AG04449 (cell line): ENCODE measurements at regions of chr2 and their contacts with region 1.

Region 1: GRCh38 chr2:46847235-46848068 is 68.2 kb downstream of the MCFD2 start:
- DNase-seq: peak; percentile 72
- H3K4me3 ChIP-seq: no peak overlapping the region
- CTCF ChIP-seq: no peak

Region 2: DNA sequence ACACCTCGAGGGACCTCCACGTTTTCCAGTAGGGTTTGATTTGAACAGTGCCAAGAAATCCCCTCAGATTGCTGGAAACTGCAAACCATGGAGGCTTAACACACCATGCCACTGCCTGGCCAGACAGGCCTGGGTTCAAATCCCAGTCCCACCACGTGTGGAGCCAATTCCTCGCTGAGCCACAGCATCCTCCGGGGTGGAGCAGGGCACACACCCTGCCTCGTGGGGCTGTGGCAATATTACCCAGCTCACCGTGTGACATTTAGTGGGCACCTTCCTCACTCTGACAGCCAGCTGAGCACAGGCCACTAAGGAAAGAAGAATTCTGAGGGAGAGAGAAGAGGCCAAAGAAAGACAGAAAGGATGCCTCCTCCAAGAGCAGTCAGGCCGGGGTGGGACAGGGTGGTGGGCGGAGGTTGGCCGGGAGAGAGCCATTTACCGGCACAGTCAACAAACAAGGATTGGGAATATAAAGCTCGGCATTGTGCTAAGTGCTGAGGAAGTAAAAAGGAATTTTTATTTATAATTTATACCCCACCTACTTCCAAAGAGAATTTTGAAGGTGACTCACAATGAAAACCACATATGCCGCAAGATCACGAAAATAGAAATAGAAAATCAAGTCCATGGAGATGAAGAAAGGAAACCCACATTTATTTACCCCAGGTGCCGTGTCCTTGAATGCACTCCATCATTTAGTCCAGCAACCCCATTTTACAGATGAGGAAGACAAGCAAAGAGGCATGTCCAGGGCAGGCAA is 43.4 kb before region 1 on chr2:
- CTCF ChIA-PET with region 1: interaction called, 4 read pairs
- POLR2A ChIA-PET with region 1: interaction called, 13 read pairs
- DNase-seq: peak; percentile 81
- H3K4me3 ChIP-seq: no peak overlapping the region
- CTCF ChIP-seq: no peak

Region 3: DNA sequence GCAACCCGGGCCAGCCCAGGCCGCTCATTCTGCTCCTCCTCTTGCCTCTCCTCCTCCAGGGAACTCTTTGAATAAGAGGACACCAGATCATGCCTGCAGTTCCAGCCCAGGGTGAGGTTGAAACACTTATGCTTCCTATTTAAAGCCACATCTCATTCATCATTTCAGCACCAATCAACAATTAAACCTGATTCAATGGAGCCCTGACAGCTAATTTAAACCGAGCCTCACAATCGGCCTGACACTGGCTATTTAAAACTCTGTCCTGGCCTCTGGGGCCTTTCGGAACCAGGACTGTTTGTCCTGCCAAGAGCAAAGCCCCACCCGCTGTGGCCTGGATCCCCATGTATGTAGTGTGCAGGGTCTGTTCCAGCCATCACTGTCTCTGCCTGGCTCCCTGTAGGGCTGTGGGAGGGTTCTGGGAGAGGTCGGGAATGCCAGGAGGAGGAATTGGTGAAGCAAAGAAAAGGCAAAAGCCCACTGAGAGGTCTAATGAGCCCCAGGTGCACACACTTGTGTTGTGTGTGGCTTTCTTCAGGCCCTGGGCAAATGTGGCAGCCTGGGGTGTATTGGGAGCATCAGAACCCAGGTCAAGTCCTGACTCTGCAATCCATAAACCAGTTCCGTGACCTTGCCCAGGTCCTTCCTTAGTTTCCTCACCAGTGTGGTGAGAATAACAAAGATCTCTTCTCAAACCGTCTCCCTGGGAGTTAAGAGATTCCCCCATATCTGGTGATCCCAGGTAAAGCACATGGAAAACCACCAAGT is 29.1 kb before region 1 on chr2:
- CTCF ChIA-PET with region 1: no interaction called
- POLR2A ChIA-PET with region 1: no interaction called
- DNase-seq: no peak
- H3K4me3 ChIP-seq: no peak overlapping the region
- CTCF ChIP-seq: no peak